Activated CD8-positive, alpha-beta T cell treated with anti-CD3 and anti-CD28 coated beads for 36 hours (primary cell): ENCODE measurements at regions of chr11 and their contacts with region 1.

Region 1: GRCh38 chr11:3037040-3037944 is 19.9 kb downstream of the CARS1 start:
- DNase-seq: peak; percentile 70
- ATAC-seq: peak; percentile 75
- H3K4me3 Mint-ChIP-seq: no peak overlapping the region
- H3K27ac Mint-ChIP-seq: no peak overlapping the region
- H3K4me1 Mint-ChIP-seq: peaks cover 17% of the 10 kb centered on the region
- H3K27me3 Mint-ChIP-seq: no peaks in the 10 kb centered on the region
- CTCF ChIP-seq: peak; percentile 65

Region 2: GRCh38 chr11:2791521-2792380 is 245.5 kb before region 1 on chr11:
- CTCF ChIA-PET with region 1: no interaction called
- POLR2A ChIA-PET with region 1: no interaction called
- intact Hi-C with region 1: no loop called
- DNase-seq: peak; percentile 54
- ATAC-seq: peak; percentile 76
- H3K4me3 Mint-ChIP-seq: peak overlapping the region; percentile 58
- H3K27ac Mint-ChIP-seq: peak overlapping the region; percentile 63
- H3K4me1 Mint-ChIP-seq: no peaks in the 10 kb centered on the region
- H3K27me3 Mint-ChIP-seq: no peaks in the 10 kb centered on the region
- CTCF ChIP-seq: no peak

Region 3: DNA sequence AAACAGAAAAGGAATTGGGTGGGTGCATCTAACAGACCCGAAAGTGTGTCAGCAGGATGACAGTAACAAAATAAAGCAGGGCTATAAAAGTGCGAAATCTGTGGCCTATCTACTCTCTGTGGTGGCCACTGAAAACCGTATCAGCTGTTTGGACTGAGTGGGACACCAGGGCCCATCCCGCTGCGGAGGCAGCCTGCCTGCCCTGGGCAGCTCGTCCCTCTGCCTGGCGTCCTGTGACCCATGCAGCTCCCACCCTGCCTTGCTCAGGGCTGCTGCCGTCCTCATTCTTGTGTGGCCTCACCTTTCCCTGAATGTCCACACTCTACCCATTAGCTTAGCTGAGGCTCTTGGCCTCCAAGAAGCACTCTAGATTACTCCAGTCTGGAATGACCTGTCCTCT is 10.5 kb before region 1 on chr11:
- CTCF ChIA-PET with region 1: interaction called, 11 read pairs
- POLR2A ChIA-PET with region 1: interaction called, 3 read pairs
- intact Hi-C with region 1: no loop called
- DNase-seq: no peak
- ATAC-seq: no peak
- H3K4me3 Mint-ChIP-seq: no peak overlapping the region
- H3K27ac Mint-ChIP-seq: no peak overlapping the region
- H3K4me1 Mint-ChIP-seq: peaks cover 18% of the 10 kb centered on the region
- H3K27me3 Mint-ChIP-seq: no peaks in the 10 kb centered on the region
- CTCF ChIP-seq: no peak

Region 4: DNA sequence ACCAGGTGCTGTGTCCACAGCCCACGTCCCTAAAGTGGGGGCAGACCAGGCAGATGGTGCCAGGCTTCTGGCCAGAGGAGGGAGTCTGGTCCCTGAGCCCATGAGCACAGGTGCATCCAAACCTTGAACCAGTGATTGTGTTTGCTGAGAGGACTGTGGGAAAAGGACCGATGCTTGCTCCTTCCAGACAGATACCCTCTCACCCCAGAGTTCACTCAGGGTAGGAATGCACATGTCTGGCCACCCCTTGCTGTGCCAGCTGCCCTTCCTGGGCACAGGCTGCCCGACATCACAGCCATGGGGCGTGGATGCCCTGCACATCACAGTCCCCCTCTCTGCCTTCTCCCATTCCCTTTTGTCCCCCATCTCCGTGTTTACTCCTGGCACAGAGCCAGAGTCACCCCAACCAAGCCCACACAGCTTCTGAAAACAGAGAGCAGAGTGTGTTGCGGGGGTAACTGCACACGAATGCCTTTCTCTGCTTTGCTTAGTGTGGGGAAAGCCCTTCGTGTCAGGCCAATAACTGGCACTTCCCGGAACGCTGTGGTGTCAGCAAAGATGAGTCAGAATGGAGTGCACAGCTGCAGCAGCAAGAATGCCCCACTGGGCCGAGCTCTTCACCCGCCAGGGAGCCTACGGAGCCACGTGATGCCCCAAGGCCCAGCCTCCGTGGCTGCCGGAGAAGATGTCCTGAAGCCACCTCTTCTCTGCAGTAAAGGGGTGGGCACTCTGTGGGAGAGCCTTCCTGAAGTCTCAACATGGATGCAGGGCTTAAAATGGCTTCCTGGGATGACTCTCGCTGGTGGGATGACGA is 12.3 kb after region 1 on chr11:
- CTCF ChIA-PET with region 1: interaction called, 11 read pairs
- POLR2A ChIA-PET with region 1: interaction called, 11 read pairs
- intact Hi-C with region 1: no loop called
- DNase-seq: peak; percentile 78
- ATAC-seq: peak; percentile 93
- H3K4me3 Mint-ChIP-seq: peak overlapping the region; percentile 13
- H3K27ac Mint-ChIP-seq: peak overlapping the region; percentile 81
- H3K4me1 Mint-ChIP-seq: peaks cover 46% of the 10 kb centered on the region
- H3K27me3 Mint-ChIP-seq: no peaks in the 10 kb centered on the region
- CTCF ChIP-seq: no peak

Region 5: GRCh38 chr11:3077846-3078440 is 40.7 kb after region 1 on chr11:
- CTCF ChIA-PET with region 1: no interaction called
- POLR2A ChIA-PET with region 1: no interaction called
- intact Hi-C with region 1: no loop called
- DNase-seq: no peak
- ATAC-seq: no peak
- H3K4me3 Mint-ChIP-seq: no peak overlapping the region
- H3K27ac Mint-ChIP-seq: no peak overlapping the region
- H3K4me1 Mint-ChIP-seq: no peaks in the 10 kb centered on the region
- H3K27me3 Mint-ChIP-seq: peaks cover 2% of the 10 kb centered on the region
- CTCF ChIP-seq: no peak

Region 6: GRCh38 chr11:3123761-3124733 is 86.8 kb after region 1 on chr11:
- CTCF ChIA-PET with region 1: no interaction called
- POLR2A ChIA-PET with region 1: no interaction called
- intact Hi-C with region 1: no loop called
- DNase-seq: no peak
- ATAC-seq: no peak
- H3K4me3 Mint-ChIP-seq: no peak overlapping the region
- H3K27ac Mint-ChIP-seq: no peak overlapping the region
- H3K4me1 Mint-ChIP-seq: no peaks in the 10 kb centered on the region
- H3K27me3 Mint-ChIP-seq: no peaks in the 10 kb centered on the region
- CTCF ChIP-seq: no peak